ENCODE measurements at regions of chr5 and their contacts with region 1.

Region 1: GRCh38 chr5:6636293-6636692 is 3.1 kb downstream of the SRD5A1 start:
- DNase-seq: peak in 1 of 2 donors; percentile 47
- H3K4me3 ChIP-seq: no peak overlapping the region
- CTCF ChIP-seq: no peak
- POLR2A ChIP-seq: no peak

Region 2: DNA sequence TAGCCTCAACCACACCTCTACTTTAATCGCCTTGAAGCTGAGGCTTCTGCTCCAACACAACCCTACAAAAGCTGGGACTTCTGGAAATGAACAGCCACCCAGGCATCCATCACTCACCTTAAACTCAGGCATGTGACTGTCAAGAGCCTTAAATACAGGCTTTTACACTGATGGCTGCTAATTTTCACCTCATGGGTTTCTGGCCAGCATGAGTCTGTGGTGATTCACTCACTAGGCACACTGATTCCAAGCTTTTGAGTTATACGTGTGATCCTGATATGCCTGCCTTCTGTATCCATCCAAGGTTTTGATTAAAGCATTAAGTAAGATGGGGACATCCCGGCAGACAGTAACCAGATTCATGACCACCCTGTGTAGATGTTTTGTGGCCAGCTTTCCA is 12.4 kb before region 1 on chr5:
- intact Hi-C with region 1: loop called (anchors 1 kb)
- DNase-seq: no peak
- H3K4me3 ChIP-seq: no peak overlapping the region
- CTCF ChIP-seq: no peak
- POLR2A ChIP-seq: no peak

Region 3: GRCh38 chr5:6705088-6705487 is 68.8 kb after region 1 on chr5:
- intact Hi-C with region 1: loop called (anchors 5 kb)
- DNase-seq: no peak
- H3K4me3 ChIP-seq: no peak overlapping the region
- CTCF ChIP-seq: no peak
- POLR2A ChIP-seq: no peak

Region 4: GRCh38 chr5:6765612-6766525 is 129.6 kb after region 1 on chr5:
- intact Hi-C with region 1: no loop called
- DNase-seq: peak; percentile 69 to 95
- H3K4me3 ChIP-seq: no peak overlapping the region
- CTCF ChIP-seq: no peak
- POLR2A ChIP-seq: no peak

Region 5: DNA sequence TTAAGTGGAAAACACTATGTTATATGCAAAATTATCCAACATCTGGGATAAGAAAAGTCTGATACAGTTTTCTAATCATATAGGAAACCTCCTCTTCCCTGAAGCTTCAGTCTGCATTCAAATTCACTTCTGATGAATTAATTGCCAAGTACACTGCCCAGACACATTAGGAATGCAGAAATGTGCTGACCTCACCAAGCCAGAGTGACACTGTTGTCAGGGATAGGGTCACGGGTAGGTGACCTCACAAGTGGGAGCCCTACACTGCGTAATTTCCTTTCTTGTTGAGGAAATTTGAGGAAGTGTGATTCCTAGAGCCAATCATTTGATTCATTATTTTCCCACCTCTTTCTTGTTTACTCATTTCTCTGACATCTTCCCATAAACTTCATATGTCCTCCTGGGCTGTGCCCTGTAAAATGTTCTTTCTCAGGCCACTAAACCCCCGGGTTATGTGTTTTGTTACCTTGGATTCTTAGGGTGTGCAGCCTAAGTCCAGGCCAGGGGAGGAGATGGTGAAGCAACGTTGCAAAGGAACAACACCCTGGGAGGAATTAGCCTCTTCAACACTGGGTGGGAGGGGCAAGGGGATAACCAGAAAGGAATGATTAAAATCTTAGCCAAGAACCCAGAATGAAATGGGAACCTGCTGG is 1644.5 kb after region 1 on chr5:
- intact Hi-C with region 1: no loop called
- DNase-seq: no peak
- H3K4me3 ChIP-seq: no peak overlapping the region
- CTCF ChIP-seq: no peak
- POLR2A ChIP-seq: no peak